Activated CD4-positive, alpha-beta memory T cell treated with anti-CD3 and anti-CD28 coated beads, Interleukin-2, amount 10 ng/mL, durations not matched to agents 7 days and 5 days (primary cell): ENCODE measurements at regions of chr11 and their contacts with region 1.

Region 1: GRCh38 chr11:61446211-61446651 is 16.3 kb downstream of the SDHAF2 start:
- DNase-seq: peak; percentile 86
- H3K4me3 Mint-ChIP-seq: no peak overlapping the region
- H3K27ac Mint-ChIP-seq: peak overlapping the region; percentile 7
- H3K4me1 Mint-ChIP-seq: peaks cover 19% of the 10 kb centered on the region
- H3K27me3 Mint-ChIP-seq: no peaks in the 10 kb centered on the region

Region 2: GRCh38 chr11:61406067-61406466 is 40.2 kb before region 1 on chr11:
- CTCF ChIA-PET with region 1: no interaction called
- POLR2A ChIA-PET with region 1: no interaction called
- DNase-seq: no peak
- H3K4me3 Mint-ChIP-seq: no peak overlapping the region
- H3K27ac Mint-ChIP-seq: no peak overlapping the region
- H3K4me1 Mint-ChIP-seq: peaks cover 2% of the 10 kb centered on the region
- H3K27me3 Mint-ChIP-seq: no peaks in the 10 kb centered on the region

Region 3: GRCh38 chr11:61429691-61430582 is 16.3 kb before region 1 on chr11 and contains the starts of genes CPSF7 and SDHAF2:
- CTCF ChIA-PET with region 1: interaction called, 86 read pairs
- POLR2A ChIA-PET with region 1: interaction called, 24 read pairs
- DNase-seq: peak; percentile 98
- H3K4me3 Mint-ChIP-seq: peak within 1 kb of the TSS; percentile 99
- H3K27ac Mint-ChIP-seq: peak within 1 kb of the TSS; percentile 99
- H3K4me1 Mint-ChIP-seq: peaks cover 65% of the 10 kb centered on the region
- H3K27me3 Mint-ChIP-seq: no peaks in the 10 kb centered on the region
- total RNA-seq, gene CPSF7: 89.6 to 90.2 TPM
- total RNA-seq, gene SDHAF2: 47.3 to 47.5 TPM

Region 4: DNA sequence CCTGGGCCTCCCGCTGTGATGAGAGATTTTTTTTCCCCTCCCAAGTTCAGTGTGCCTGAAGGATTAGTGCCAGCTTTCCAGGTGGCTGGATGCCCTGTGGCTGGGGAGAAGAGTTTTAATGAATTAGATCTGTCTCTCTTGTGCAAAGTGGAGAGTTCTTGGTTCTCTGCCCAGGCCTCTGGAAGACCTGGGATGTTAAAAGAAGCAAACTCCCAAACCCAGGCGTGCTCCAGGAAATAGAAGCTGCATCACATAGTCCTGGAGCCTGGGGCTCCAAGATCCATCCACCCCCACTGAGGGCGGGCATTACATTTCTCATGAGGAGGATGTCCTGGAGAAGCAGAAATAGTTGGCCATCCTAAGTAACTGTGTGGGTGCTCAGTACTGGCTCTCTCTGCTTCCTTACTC is 14.2 kb after region 1 on chr11:
- CTCF ChIA-PET with region 1: interaction called, 26 read pairs
- POLR2A ChIA-PET with region 1: interaction called, 4 read pairs
- DNase-seq: no peak
- H3K4me3 Mint-ChIP-seq: no peak overlapping the region
- H3K27ac Mint-ChIP-seq: peak overlapping the region; percentile 23
- H3K4me1 Mint-ChIP-seq: no peaks in the 10 kb centered on the region
- H3K27me3 Mint-ChIP-seq: no peaks in the 10 kb centered on the region

Region 5: GRCh38 chr11:61477727-61478148 is 31.5 kb after region 1 on chr11:
- CTCF ChIA-PET with region 1: interaction called, 15 read pairs
- POLR2A ChIA-PET with region 1: no interaction called
- DNase-seq: peak; percentile 51
- H3K4me3 Mint-ChIP-seq: no peak overlapping the region
- H3K27ac Mint-ChIP-seq: no peak overlapping the region
- H3K4me1 Mint-ChIP-seq: peaks cover 3% of the 10 kb centered on the region
- H3K27me3 Mint-ChIP-seq: no peaks in the 10 kb centered on the region

Region 6: GRCh38 chr11:61516675-61517572 is 70.7 kb after region 1 on chr11:
- CTCF ChIA-PET with region 1: interaction called, 72 read pairs
- POLR2A ChIA-PET with region 1: interaction called, 7 read pairs
- DNase-seq: peak; percentile 51
- H3K4me3 Mint-ChIP-seq: no peak overlapping the region
- H3K27ac Mint-ChIP-seq: no peak overlapping the region
- H3K4me1 Mint-ChIP-seq: peaks cover 2% of the 10 kb centered on the region
- H3K27me3 Mint-ChIP-seq: peaks cover 4% of the 10 kb centered on the region